ENCODE measurements at regions of chr5 and their contacts with region 1.

Region 1: GRCh38 chr5:43313035-43313853 is at the start of gene HMGCS1:
- DNase-seq: peak; percentile 96 to 100 (median 99)

Region 2: GRCh38 chr5:43191740-43192557 is 121.3 kb before region 1 on chr5 and contains the start of gene NIM1K:
- intact Hi-C with region 1: loop called (anchors 5 kb)
- DNase-seq: peak; percentile 82 to 97 (median 92)

Region 3: DNA sequence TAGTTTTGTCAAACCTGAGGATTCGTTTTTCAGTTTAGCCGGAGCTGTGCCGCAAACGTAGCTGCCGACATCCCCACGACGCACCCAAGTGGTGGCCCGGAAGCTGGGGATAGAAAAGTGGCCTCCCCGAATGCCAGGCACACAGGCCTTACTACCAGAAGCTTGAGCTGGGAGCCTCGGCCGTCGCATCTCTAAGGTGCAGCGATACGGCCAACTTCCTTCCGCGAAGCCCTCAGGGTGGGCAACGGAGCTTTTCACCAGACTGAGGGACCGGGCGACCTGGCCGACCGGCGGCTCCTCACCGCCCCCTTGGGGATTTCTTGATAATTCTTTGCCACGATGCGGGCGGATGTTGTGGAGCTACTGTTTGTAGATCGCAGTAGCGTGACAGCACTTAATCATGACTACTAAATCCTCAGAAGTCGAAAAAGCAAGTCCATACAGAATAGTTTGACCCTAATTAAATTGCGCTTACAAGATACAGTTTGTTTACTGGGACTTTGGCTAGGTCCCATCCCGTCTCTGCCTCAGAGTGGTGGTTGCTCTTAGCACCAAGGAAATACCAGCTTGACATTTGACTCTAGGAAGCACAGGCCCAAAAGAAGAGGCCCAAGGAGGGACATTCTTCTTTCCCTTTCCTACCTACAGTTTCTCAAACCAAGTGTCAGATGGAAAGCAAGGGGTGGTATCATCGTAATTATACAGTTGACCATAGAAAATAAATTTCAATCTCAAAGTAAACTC is 171.0 kb after region 1 on chr5:
- intact Hi-C with region 1: loop called (anchors 10 kb)
- DNase-seq: peak; percentile 67 to 93 (median 84)

Measured in head of caudate nucleus (tissue), 42 donors.